ENCODE measurements at regions of chr12 and their contacts with region 1.

Region 1: GRCh38 chr12:19431407-19432308 is 7.6 kb upstream of the AEBP2 start:
- DNase-seq: peak; percentile 27
- H3K4me3 Mint-ChIP-seq: peak overlapping the region; percentile 38
- H3K27ac Mint-ChIP-seq: peak overlapping the region; percentile 100
- H3K4me1 Mint-ChIP-seq: peaks cover 47% of the 10 kb centered on the region
- H3K27me3 Mint-ChIP-seq: no peaks in the 10 kb centered on the region

Region 2: GRCh38 chr12:19338405-19338804 is 93.3 kb before region 1 on chr12:
- intact Hi-C with region 1: no loop called
- DNase-seq: no peak
- H3K4me3 Mint-ChIP-seq: no peak overlapping the region
- H3K27ac Mint-ChIP-seq: no peak overlapping the region
- H3K4me1 Mint-ChIP-seq: no peaks in the 10 kb centered on the region
- H3K27me3 Mint-ChIP-seq: no peaks in the 10 kb centered on the region

Region 3: GRCh38 chr12:19382111-19382526 is 49.5 kb before region 1 on chr12:
- intact Hi-C with region 1: loop called (anchors 1 kb)
- DNase-seq: no peak
- H3K4me3 Mint-ChIP-seq: no peak overlapping the region
- H3K27ac Mint-ChIP-seq: peak overlapping the region; percentile 16
- H3K4me1 Mint-ChIP-seq: peaks cover 5% of the 10 kb centered on the region
- H3K27me3 Mint-ChIP-seq: no peaks in the 10 kb centered on the region

Region 4: DNA sequence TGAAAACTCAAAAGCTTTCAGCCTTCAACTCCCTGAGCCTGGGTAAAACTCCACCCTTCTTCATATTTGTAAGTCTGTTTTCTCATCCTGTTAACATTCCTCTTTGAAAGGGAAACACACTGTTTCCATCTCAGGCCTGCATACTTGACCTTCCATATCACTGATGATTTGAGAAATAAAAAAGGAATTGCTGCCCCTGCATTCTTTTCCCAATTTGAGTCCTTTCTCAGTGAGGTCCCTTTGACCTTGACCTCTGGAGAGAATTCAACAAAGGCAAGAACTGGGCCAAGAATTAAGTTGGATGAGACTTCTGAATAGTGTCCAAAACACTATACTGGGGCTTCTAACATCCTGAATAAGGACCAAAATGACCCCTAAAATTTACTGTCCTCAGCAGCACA is 115.6 kb after region 1 on chr12:
- intact Hi-C with region 1: loop called (anchors 1 kb)
- DNase-seq: no peak
- H3K4me3 Mint-ChIP-seq: no peak overlapping the region
- H3K27ac Mint-ChIP-seq: no peak overlapping the region
- H3K4me1 Mint-ChIP-seq: peaks cover 6% of the 10 kb centered on the region
- H3K27me3 Mint-ChIP-seq: no peaks in the 10 kb centered on the region

Region 5: GRCh38 chr12:19683178-19683927 is 251.7 kb after region 1 on chr12:
- intact Hi-C with region 1: loop called (anchors 1 kb)
- DNase-seq: no peak
- H3K4me3 Mint-ChIP-seq: no peak overlapping the region
- H3K27ac Mint-ChIP-seq: no peak overlapping the region
- H3K4me1 Mint-ChIP-seq: peaks cover 39% of the 10 kb centered on the region
- H3K27me3 Mint-ChIP-seq: peaks cover 4% of the 10 kb centered on the region

Measured in activated T-helper 2 cell treated with anti-CD3 and anti-CD28 coated beads, Interferon-gamma antibody, Interleukin-2, Interleukin-4, amounts not matched to agents 10 μg/mL and 5 μg/mL and 100 μg/mL, durations not matched to agents 14 hours and 24 hours and 36 hours (primary cell).